Activated naive CD4-positive, alpha-beta T cell treated with anti-CD3 and anti-CD28 coated beads for 36 hours (primary cell): ENCODE measurements at regions of chr2 and their contacts with region 1.

Region 1: DNA sequence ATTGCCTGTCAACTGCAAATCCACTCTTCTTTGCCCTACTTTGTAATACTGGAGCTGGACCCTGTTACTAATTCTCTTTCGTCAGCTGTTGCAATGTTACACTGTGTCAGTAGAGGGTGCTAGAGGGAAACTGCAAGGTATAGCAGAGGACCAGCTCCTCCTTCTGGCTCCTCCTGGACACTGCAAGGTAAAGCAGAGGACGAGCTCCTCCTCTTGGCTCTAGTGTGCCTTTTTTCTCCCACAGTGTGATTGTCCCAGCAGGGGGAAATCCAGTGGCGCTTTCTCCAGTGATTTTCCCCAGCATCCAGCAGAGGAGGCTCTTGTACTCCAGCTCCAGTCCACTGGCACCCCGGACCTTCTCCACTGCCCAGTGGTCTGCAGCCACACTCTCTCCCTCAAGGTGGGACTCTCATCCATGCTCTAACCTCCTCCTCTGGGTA is 95.6 kb downstream of the CAPN13 start:
- DNase-seq: peak; percentile 95
- H3K4me3 Mint-ChIP-seq: no peak overlapping the region
- H3K27ac Mint-ChIP-seq: no peak overlapping the region
- H3K4me1 Mint-ChIP-seq: peaks cover 4% of the 10 kb centered on the region
- H3K27me3 Mint-ChIP-seq: no peaks in the 10 kb centered on the region

Region 2: GRCh38 chr2:30139131-30139870 is 572.4 kb before region 1 on chr2:
- CTCF ChIA-PET with region 1: interaction called, 16 read pairs
- intact Hi-C with region 1: loop called (anchors 1 kb)
- DNase-seq: peak; percentile 82
- H3K4me3 Mint-ChIP-seq: peak overlapping the region; percentile 51
- H3K27ac Mint-ChIP-seq: peak overlapping the region; percentile 79
- H3K4me1 Mint-ChIP-seq: peaks cover 27% of the 10 kb centered on the region
- H3K27me3 Mint-ChIP-seq: no peaks in the 10 kb centered on the region

Region 3: GRCh38 chr2:30178618-30179434 is 532.8 kb before region 1 on chr2:
- CTCF ChIA-PET with region 1: interaction called, 27 read pairs
- intact Hi-C with region 1: no loop called
- DNase-seq: no peak
- H3K4me3 Mint-ChIP-seq: no peak overlapping the region
- H3K27ac Mint-ChIP-seq: no peak overlapping the region
- H3K4me1 Mint-ChIP-seq: no peaks in the 10 kb centered on the region
- H3K27me3 Mint-ChIP-seq: no peaks in the 10 kb centered on the region

Region 4: DNA sequence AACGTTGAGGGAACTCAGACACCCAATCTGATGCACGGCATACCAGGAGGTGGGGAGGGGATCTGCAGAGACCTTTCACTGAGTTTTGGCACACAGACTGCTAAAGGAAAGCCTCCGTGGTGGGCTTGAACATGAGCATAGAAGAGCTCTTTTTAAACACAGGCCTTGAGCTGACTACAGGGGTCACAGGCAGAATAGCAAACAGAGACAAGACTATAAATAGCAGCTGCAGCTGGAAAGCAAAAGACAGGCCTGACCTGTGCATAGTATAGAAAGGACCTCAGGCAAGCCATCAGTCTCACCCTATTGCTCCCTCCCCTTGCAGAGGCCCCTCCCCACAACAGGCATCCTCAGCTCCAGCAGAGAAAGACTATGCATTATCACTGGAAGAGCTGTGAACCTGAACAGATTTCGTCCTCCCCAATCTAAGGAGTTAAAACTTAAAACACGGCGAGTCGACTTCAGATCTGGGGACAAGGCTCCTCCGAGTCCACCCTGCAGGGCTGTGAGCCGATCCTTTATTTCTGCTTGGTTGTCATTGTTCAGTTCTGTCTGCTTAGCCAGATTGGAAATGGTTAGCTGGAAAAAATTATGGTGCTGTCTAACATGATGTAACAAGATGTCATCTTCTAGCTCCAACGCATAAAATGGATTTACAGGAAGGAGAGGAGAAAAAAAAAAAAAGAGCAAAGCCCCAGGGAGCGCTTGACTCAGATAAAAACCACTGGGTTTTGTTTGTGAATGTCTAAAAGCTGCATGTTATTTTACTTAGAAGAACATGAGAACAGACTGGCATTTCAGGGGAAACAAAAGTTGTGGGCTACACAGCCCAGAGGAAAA is 289.8 kb before region 1 on chr2:
- CTCF ChIA-PET with region 1: interaction called, 4 read pairs
- intact Hi-C with region 1: loop called (anchors 2 kb)
- DNase-seq: peak; percentile 37
- H3K4me3 Mint-ChIP-seq: peak overlapping the region; percentile 74
- H3K27ac Mint-ChIP-seq: peak overlapping the region; percentile 94
- H3K4me1 Mint-ChIP-seq: peaks cover 54% of the 10 kb centered on the region
- H3K27me3 Mint-ChIP-seq: no peaks in the 10 kb centered on the region

Region 5: GRCh38 chr2:30662268-30663131 is 49.2 kb before region 1 on chr2:
- CTCF ChIA-PET with region 1: interaction called, 11 read pairs
- intact Hi-C with region 1: no loop called
- DNase-seq: no peak
- H3K4me3 Mint-ChIP-seq: no peak overlapping the region
- H3K27ac Mint-ChIP-seq: no peak overlapping the region
- H3K4me1 Mint-ChIP-seq: no peaks in the 10 kb centered on the region
- H3K27me3 Mint-ChIP-seq: no peaks in the 10 kb centered on the region

Region 6: DNA sequence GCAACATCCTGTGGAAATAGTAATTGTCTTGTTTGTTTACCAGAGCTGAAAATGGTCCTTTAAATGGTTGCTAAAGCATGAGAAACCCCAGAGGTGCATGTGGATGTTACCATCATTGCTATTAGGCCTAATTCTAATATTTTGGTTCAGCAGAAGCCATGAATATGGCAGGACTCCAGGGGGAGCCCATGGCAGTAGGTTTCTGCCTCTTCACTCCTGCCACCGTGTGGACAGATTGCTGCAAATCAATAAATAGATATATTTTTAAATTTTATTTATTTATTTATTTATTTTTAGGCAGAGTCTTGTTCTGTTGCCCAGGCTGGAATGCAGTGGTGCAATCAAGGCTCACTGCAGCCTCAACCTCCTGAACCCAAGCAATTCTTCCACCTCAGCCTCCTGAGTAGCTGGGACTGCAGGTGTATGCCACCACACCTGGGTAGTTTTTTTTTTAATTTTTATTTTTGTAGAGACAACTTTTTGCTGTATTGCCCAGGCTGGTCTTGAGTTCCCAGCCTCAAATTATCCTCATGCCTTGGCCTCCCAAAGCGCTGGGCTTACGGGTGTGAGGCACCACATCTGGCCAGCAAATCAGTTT is 150.5 kb after region 1 on chr2:
- CTCF ChIA-PET with region 1: interaction called, 72 read pairs
- intact Hi-C with region 1: loop called (anchors 1 kb)
- DNase-seq: peak; percentile 71
- H3K4me3 Mint-ChIP-seq: no peak overlapping the region
- H3K27ac Mint-ChIP-seq: no peak overlapping the region
- H3K4me1 Mint-ChIP-seq: no peaks in the 10 kb centered on the region
- H3K27me3 Mint-ChIP-seq: peaks cover 7% of the 10 kb centered on the region

Region 7: GRCh38 chr2:31523871-31524492 is 812.3 kb after region 1 on chr2:
- CTCF ChIA-PET with region 1: interaction called, 7 read pairs
- intact Hi-C with region 1: loop called (anchors 1 kb)
- DNase-seq: peak; percentile 74
- H3K4me3 Mint-ChIP-seq: no peak overlapping the region
- H3K27ac Mint-ChIP-seq: no peak overlapping the region
- H3K4me1 Mint-ChIP-seq: no peaks in the 10 kb centered on the region
- H3K27me3 Mint-ChIP-seq: peaks cover 10% of the 10 kb centered on the region